ENCODE measurements at regions of chr4 and their contacts with region 1.

Region 1: DNA sequence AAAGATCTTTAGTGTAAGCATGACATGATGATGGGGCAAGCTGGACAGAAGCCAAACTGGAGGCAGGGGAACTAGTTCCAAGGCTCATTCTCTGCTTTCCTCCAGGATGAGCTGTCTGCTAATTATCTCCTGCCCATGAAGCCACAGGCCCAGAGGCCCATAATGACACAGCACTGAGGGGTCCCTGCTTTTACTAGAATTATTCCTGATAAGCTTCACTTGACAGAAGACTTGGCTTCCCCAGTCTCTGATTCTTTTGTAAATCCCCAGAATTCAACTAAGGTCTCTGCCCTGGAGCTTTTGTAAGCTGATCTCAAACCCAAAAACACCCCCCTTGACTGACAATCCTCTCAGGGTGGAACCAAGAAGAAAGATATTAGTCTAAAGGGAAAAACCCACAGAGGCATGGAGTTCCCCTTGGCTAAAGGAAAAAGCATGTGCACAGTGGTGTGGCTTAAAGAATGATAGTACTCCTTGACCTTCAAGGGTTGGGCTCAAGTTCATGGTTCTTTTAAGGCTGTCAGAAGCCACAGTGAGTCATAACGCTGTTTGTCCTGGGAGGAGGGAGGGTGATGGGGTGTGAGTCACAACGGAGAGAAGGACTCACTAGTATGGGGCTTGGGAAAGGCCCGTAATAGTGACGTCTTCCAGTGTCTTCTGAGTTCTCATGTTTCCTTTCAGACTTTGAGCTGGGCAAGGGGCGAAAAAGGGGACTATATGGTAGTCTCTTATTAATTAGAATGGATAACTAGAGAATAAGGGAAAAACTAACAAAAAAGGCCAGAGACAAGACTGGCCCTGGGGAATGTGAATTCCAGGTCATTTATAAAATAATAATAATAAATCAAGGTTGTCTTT is 146.0 kb upstream of the CPEB2 start:
- DNase-seq: peak; percentile 88
- H3K4me3 Mint-ChIP-seq: no peak overlapping the region
- H3K27ac Mint-ChIP-seq: peak overlapping the region; percentile 86
- H3K4me1 Mint-ChIP-seq: peaks cover 24% of the 10 kb centered on the region
- H3K27me3 Mint-ChIP-seq: peaks cover 19% of the 10 kb centered on the region

Region 2: DNA sequence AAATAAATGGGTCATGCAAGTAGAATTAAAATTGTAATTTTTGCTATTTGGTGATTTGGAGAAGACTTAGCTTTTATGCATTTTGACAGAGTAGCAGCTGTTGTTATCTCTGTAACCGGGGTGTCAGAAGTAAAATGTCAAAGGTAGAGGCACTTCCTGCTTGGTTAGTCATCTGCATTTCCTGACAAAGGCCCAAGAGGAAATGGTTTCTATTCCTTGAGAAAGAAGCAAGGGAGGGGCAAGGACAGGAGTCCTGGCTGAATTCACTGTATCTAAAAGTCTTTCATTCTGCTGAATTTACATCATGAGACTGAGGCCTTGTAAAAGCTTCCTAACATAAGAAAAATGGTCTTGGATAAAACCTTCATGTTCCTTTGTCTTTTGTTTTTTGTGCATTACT is 677.9 kb before region 1 on chr4:
- CTCF ChIA-PET with region 1: no interaction called
- intact Hi-C with region 1: loop called (anchors 5 kb)
- DNase-seq: peak; percentile 7
- H3K4me3 Mint-ChIP-seq: no peak overlapping the region
- H3K27ac Mint-ChIP-seq: peak overlapping the region; percentile 75
- H3K4me1 Mint-ChIP-seq: peaks cover 20% of the 10 kb centered on the region
- H3K27me3 Mint-ChIP-seq: no peaks in the 10 kb centered on the region

Region 3: GRCh38 chr4:14877246-14878225 is 21.2 kb after region 1 on chr4:
- CTCF ChIA-PET with region 1: interaction called, 3 read pairs
- intact Hi-C with region 1: loop called (anchors 1 kb)
- DNase-seq: no peak
- H3K4me3 Mint-ChIP-seq: no peak overlapping the region
- H3K27ac Mint-ChIP-seq: no peak overlapping the region
- H3K4me1 Mint-ChIP-seq: peaks cover 28% of the 10 kb centered on the region
- H3K27me3 Mint-ChIP-seq: no peaks in the 10 kb centered on the region

Region 4: DNA sequence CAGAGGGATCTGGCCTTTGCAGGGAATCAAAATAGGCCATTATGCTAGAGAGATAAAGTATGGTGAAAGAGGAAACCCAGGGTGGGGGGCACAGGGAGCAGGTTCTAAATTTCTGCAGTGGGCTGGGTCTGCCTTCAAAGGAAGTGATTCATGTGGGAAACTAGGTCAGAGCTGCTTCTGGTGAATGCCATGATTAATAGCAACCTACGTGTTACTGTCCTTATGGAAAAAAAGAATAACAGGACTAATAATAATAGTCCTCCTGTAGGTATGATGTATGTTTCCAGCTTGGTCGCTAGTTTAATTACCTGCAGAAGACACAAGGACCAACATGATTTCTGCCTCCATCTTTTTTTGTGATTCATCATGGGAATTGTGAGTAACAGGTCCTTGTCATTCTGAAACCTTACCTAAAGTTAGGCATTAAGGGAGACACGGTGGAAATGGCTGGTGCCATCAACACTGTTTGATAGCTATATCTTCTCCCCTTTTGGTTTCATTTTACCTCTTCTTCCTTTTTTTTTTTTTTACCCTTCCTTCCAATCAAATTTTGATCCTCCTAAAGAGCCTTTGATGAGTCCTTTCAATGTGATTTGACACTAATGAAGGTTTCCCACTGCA is 326.4 kb after region 1 on chr4:
- CTCF ChIA-PET with region 1: no interaction called
- intact Hi-C with region 1: loop called (anchors 5 kb)
- DNase-seq: peak; percentile 56
- H3K4me3 Mint-ChIP-seq: no peak overlapping the region
- H3K27ac Mint-ChIP-seq: no peak overlapping the region
- H3K4me1 Mint-ChIP-seq: peaks cover 25% of the 10 kb centered on the region
- H3K27me3 Mint-ChIP-seq: no peaks in the 10 kb centered on the region

Region 5: GRCh38 chr4:15423285-15423711 is 567.0 kb after region 1 on chr4:
- CTCF ChIA-PET with region 1: no interaction called
- intact Hi-C with region 1: loop called (anchors 2 kb)
- DNase-seq: peak; percentile 59
- H3K4me3 Mint-ChIP-seq: no peak overlapping the region
- H3K27ac Mint-ChIP-seq: peak overlapping the region; percentile 20
- H3K4me1 Mint-ChIP-seq: peaks cover 33% of the 10 kb centered on the region
- H3K27me3 Mint-ChIP-seq: no peaks in the 10 kb centered on the region

Measured in activated naive CD4-positive, alpha-beta T cell treated with anti-CD3 and anti-CD28 coated beads for 36 hours (primary cell).